ENCODE measurements at regions of chr1 and their contacts with region 1.

Region 1: DNA sequence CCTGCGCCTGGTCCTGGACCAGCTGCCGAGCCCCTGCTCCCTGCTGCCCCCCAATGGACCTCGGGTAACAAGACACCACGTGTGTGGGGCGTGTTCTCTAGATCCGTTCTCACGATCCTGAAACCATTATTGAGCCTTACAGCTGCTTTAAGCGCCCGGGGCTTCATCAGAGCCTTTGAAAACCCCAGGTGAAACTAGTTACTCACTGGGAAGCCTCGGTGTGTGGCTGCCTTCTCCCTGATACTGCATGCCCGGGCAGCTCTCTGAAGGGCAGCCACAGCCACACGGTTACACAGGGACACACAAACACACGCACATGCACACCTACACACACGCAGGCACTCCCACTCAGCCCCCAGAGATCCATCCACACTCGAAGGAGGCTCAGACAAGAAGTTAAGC is 5.3 kb downstream of the HES2 start:
- DNase-seq: peak; percentile 88
- CTCF ChIP-seq: peak; percentile 64

Region 2: DNA sequence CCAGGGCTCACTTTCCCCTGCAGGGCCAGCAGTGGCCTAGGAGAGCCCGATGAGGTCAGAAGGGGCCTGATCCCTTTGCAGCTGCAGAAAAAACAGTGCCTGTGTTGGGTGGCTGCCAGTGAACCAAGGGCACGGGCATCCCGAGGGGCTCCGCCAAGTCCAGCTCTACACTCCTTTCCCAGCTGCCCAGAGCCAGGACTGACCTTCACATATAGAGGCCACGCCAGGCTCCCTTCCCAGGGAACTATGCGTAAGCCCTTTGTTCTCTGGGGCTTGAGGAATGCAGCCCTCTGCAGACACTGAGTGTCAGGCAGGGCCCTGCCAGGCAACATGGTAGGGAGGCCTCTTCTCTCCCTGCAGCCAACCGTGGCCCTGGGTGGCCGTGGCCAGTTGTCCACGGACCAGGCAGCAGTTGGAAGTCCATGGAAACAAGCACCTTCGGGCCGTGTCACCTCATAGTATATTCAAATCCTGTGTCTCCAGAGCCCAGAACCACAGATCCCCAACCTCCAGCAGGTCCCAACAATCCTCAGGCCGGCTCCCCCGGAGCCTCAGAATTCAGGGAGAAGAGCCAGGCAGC is 616.2 kb before region 1 on chr1:
- in situ Hi-C with region 1: no loop called
- DNase-seq: no peak
- CTCF ChIP-seq: no peak

Region 3: GRCh38 chr1:6185635-6186382 is 228.6 kb before region 1 on chr1:
- in situ Hi-C with region 1: no loop called
- DNase-seq: no peak
- CTCF ChIP-seq: peak; percentile 53

Region 4: GRCh38 chr1:6359216-6360116 is 55.0 kb before region 1 on chr1:
- in situ Hi-C with region 1: loop called (anchors 10 kb)
- DNase-seq: peak; percentile 79
- CTCF ChIP-seq: no peak